ENCODE measurements at regions of chr15 and their contacts with region 1.

Region 1: DNA sequence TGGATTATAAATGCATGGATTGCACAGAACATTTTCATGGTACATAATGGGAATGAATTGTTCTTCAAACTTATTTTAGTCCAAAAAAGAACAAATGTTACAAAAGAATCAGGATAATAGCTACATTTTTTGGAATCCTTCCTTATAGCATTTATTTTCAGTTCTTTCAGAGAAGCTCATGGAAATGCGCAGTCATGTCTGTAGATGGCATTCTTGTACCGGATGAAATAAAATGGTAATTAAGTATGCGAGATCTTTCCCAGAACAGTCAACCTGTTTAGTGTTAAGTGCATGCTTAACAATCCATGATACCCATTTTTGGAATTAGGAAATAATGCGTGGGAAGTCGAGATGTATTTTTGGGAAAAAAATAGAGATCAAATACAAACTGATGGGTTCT is 38.2 kb upstream of the GOLGA8B start:
- DNase-seq: no peak
- H3K4me3 ChIP-seq: no peak overlapping the region
- H3K27ac ChIP-seq: no peak overlapping the region
- H3K4me1 ChIP-seq: peaks cover 3% of the 10 kb centered on the region
- H3K27me3 ChIP-seq: no peaks in the 10 kb centered on the region
- CTCF ChIP-seq: peak; percentile 61

Region 2: GRCh38 chr15:34718681-34719641 is 97.3 kb after region 1 on chr15:
- intact Hi-C with region 1: no loop called
- DNase-seq: no peak
- H3K4me3 ChIP-seq: no peak overlapping the region
- H3K27ac ChIP-seq: peak overlapping the region; percentile 90
- H3K4me1 ChIP-seq: peaks cover 70% of the 10 kb centered on the region
- H3K27me3 ChIP-seq: no peaks in the 10 kb centered on the region
- CTCF ChIP-seq: no peak

Region 3: DNA sequence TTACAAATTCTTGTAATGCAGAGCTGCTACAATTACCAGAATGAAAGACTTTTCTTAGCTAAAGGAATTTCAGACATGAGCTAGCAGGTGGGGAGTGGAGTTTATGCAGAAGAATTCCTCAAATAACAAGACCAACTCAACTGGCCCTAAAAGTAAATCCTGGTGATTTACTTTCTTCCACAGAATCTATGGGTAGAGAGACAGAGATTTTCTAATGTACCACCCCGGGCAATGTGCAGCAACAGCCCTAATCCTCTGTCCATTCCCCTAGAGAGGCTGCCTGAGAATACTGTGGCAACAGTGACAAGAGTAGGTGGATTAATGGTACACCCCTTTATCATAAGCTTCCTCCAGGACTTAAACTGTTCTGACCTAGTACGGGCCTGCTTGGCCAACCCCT is 292.6 kb after region 1 on chr15:
- intact Hi-C with region 1: loop called (anchors 5 kb)
- DNase-seq: no peak
- H3K4me3 ChIP-seq: no peak overlapping the region
- H3K27ac ChIP-seq: no peak overlapping the region
- H3K4me1 ChIP-seq: no peaks in the 10 kb centered on the region
- H3K27me3 ChIP-seq: no peaks in the 10 kb centered on the region
- CTCF ChIP-seq: no peak

Measured in left ventricle myocardium inferior (tissue), 1 donor.